Keratinocyte (primary cell): ENCODE measurements at regions of chr2 and their contacts with region 1.

Region 1: GRCh38 chr2:232854082-232854481 is 16.0 kb upstream of the SNORC start:
- DNase-seq: no peak
- H3K4me3 ChIP-seq: no peak overlapping the region
- H3K27ac ChIP-seq: no peak overlapping the region
- H3K4me1 ChIP-seq: peaks cover 8% of the 10 kb centered on the region
- H3K27me3 ChIP-seq: no peaks in the 10 kb centered on the region
- CTCF ChIP-seq: no peak

Region 2: GRCh38 chr2:233247765-233248164 is 393.7 kb after region 1 on chr2:
- dilution Hi-C with region 1: loop called (anchors 25 kb)
- DNase-seq: peak; percentile 97
- H3K4me3 ChIP-seq: no peak overlapping the region
- H3K27ac ChIP-seq: peak overlapping the region; percentile 91
- H3K4me1 ChIP-seq: peaks cover 23% of the 10 kb centered on the region
- H3K27me3 ChIP-seq: no peaks in the 10 kb centered on the region
- CTCF ChIP-seq: no peak